Activated naive CD8-positive, alpha-beta T cell treated with anti-CD3 and anti-CD28 coated beads, Interleukin-2, amount 10 ng/mL, durations not matched to agents 7 days and 5 days (primary cell): ENCODE measurements at regions of chr6 and their contacts with region 1.

Region 1: DNA sequence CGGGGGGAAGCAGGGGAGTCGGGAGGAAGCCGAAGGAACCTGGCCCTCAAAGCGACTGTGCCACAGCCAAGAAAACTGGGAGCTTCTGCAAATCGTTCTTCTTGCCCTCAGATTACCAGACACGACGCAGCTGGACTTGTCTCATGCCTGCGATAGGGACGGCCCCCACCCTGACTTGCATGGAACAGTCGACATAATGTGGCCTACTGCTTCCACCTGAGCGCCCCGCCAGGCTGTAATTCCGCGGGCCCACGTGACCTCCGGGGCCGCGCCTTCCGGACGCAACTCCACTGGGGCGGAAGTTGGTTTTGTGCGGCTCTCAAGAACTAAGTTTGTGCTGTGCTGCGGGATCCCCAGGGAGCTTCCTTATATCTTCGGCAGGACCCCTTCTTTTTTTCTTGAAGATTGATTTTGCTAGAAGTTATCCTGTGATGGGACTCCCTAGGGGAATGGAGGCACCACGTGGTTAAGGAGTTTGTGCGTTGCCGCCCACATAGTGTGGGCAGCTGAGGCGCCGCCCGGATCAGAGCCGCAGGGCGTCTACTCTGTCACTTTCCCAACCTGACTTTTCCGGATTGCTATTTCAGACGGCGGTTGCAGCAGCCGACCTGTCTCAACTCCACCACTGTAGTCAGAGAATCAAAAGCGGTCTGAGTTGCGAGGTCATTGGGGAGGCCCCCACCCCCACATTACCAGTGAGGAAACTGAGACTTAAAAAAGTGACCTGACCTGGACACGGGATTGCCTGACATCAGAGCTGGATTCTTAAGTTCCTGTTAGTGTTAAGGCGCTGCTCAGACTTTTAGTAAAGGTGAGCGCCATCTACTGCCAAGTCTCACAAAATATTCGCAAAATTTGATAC is 540 bp upstream of the CD164 start:
- DNase-seq: peak; percentile 92
- ATAC-seq: peak; percentile 65
- H3K4me3 Mint-ChIP-seq: peak overlapping the region; percentile 98
- H3K27ac Mint-ChIP-seq: peak overlapping the region; percentile 99
- H3K4me1 Mint-ChIP-seq: peaks cover 30% of the 10 kb centered on the region
- H3K27me3 Mint-ChIP-seq: no peaks in the 10 kb centered on the region

Region 2: GRCh38 chr6:109095027-109095834 is 287.6 kb before region 1 on chr6 and contains the start of gene CEP57L1:
- POLR2A ChIA-PET with region 1: interaction called, 40 read pairs
- DNase-seq: peak; percentile 95
- ATAC-seq: peak; percentile 81
- H3K4me3 Mint-ChIP-seq: peak within 1 kb of the TSS; percentile 95
- H3K27ac Mint-ChIP-seq: peak within 1 kb of the TSS; percentile 99
- H3K4me1 Mint-ChIP-seq: peaks cover 45% of the 10 kb centered on the region
- H3K27me3 Mint-ChIP-seq: no peaks in the 10 kb centered on the region
- total RNA-seq, gene CEP57L1: 20.5 to 22.6 TPM

Region 3: GRCh38 chr6:109236115-109237076 is 146.4 kb before region 1 on chr6:
- POLR2A ChIA-PET with region 1: interaction called, 13 read pairs
- DNase-seq: peak; percentile 45
- ATAC-seq: peak; percentile 74
- H3K4me3 Mint-ChIP-seq: peak overlapping the region; percentile 67
- H3K27ac Mint-ChIP-seq: peak overlapping the region; percentile 87
- H3K4me1 Mint-ChIP-seq: peaks cover 27% of the 10 kb centered on the region
- H3K27me3 Mint-ChIP-seq: peaks cover 2% of the 10 kb centered on the region

Region 4: GRCh38 chr6:109428889-109429477 is 46.2 kb after region 1 on chr6:
- POLR2A ChIA-PET with region 1: no interaction called
- DNase-seq: no peak
- ATAC-seq: no peak
- H3K4me3 Mint-ChIP-seq: no peak overlapping the region
- H3K27ac Mint-ChIP-seq: no peak overlapping the region
- H3K4me1 Mint-ChIP-seq: peaks cover 3% of the 10 kb centered on the region
- H3K27me3 Mint-ChIP-seq: peaks cover 2% of the 10 kb centered on the region

Region 5: DNA sequence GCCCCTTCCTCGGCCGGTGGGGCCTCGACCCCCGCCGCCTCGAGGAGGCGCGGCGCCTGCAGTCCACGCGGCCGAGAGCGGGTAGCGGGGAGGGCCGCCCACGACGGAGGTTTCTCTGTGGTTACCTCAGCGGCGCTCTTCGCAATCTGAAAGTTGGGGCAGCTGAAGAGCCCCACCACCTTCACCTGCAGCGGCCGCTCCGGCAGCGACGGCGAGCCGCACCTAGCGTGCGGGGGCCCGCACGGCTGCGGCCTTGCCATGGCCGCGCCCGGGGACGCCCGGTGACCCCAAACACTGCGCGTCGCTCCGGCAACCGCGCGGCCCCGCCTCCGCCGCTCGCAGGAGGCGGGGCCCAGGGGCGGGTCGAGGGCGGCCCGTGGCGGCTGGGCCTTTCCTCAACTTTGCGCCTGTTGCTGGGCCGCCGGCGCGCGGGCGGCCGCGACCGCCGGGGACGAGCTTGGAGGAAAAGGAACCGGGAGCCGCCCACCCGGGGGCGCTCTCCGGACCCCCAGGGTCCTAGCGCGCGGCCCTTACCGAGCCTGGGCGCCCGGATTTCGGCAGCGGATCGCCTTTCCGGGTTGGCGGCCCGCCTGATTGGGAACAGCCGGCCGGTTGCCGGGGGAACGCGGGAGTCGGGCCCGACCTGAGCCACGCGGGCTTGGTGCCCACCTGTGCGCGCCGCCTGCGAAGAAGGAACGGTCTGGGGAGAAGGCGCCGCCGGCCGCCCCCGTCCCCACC is 57.7 kb after region 1 on chr6 and contains the starts of genes PPIL6 and SMPD2:
- POLR2A ChIA-PET with region 1: interaction called, 63 read pairs
- DNase-seq: peak; percentile 88
- ATAC-seq: peak; percentile 85
- H3K4me3 Mint-ChIP-seq: peak within 1 kb of the TSS; percentile 93
- H3K27ac Mint-ChIP-seq: peak within 1 kb of the TSS; percentile 80
- H3K4me1 Mint-ChIP-seq: peaks cover 16% of the 10 kb centered on the region
- H3K27me3 Mint-ChIP-seq: no peaks in the 10 kb centered on the region
- total RNA-seq, gene PPIL6: 0.17 to 0.53 TPM
- total RNA-seq, gene SMPD2: 15.6 to 16.6 TPM

Region 6: GRCh38 chr6:109482905-109483735 is 100.3 kb after region 1 on chr6 and contains the start of gene ZBTB24:
- POLR2A ChIA-PET with region 1: interaction called, 13 read pairs
- DNase-seq: peak; percentile 94
- ATAC-seq: peak; percentile 84
- H3K4me3 Mint-ChIP-seq: peak within 1 kb of the TSS; percentile 93
- H3K27ac Mint-ChIP-seq: peak within 1 kb of the TSS; percentile 89
- H3K4me1 Mint-ChIP-seq: peaks cover 40% of the 10 kb centered on the region
- H3K27me3 Mint-ChIP-seq: peaks cover 8% of the 10 kb centered on the region
- total RNA-seq, gene ZBTB24: 19.7 to 20.0 TPM